ENCODE measurements at regions of chr19 and their contacts with region 1.

Region 1: DNA sequence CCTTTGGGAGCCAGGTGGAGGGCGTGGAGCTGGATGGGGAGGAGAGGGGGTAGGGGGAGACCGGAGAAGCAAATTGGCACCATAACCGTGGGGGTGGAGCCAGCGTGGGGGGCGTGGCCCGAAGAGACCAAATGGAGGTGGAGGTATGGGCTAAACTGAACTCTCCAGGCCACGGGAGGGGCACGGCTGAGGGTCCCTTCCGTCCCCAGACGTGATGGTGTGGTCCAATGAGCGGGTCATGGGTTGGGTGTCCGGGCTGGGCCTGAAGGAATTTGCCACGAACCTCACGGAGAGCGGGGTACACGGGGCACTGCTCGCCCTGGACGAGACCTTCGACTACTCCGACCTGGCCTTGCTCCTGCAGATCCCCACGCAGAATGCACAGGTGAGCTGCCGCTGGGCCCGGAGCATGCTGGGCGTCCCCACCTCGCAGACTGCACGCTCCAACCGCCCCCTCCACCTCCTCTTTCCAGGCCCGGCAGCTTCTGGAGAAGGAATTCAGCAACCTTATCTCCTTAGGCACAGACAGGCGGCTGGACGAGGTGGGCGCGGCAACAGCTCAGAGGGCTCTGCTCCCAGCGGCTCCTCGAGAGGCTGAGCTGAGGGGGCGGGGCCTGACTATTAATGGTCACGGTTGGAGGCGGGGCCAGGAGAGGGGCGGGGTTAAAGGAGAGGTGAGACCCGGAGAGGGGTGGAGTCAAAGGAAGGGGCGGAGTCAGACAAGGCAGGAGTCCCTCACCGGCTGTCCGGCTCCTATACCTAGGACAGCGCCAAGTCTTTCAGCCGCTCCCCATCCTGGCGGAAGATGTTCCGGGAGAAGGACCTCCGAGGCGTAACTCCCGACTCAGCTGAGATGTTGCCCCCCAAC is 6.2 kb downstream of the HRC start:
- DNase-seq: peak; percentile 99
- H3K4me3 ChIP-seq: peak overlapping the region; percentile 65 to 88 (median 70)
- H3K27ac ChIP-seq: peak overlapping the region; percentile 80 to 87 (median 87)
- H3K4me1 ChIP-seq: peaks cover 33 to 56% (median 53%) of the 10 kb centered on the region in 4 donors
- H3K27me3 ChIP-seq: no peaks in the 10 kb centered on the region
- CTCF ChIP-seq: no peak
- EP300 ChIP-seq: no peak
- POLR2A ChIP-seq: peak; percentile 4

Region 2: DNA sequence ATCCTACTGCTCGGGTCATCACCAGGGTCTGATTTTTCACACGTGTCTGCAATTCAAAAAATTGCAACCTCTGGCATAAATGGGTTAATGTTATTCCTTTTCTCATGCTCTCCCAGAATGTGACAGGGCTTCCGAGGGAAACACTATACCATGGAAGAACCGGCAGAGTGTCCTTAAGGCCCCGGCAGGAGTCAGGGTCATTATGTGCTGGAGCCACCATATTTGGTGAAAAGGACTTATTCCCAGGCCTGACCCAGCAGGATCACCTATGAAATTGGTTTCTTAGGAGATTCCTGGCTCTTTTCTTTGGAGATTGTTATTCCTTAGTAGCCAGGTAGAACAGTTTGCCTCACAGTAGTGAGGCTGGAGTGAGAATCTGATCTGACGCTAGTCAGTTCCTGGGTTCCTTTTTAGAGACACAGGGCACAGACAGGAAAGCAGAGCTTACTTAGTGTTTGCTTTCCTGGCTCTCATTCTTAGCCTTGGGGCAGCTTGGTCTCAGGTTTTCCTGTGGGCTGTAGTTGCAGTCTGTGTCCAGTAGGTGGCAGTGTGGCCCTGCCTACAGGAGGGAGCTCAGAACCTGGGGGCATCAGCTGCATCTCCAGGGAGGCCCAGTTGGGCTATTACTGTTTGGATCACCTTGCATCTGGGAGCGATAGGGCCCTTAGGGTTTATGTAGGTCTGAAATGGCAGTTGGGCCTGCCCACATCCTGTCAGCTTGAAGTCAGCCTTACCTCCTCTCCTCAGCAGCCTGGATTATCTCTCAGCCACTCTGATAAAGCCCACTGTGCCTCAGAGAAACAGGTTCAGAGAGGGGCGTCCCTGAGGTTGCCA is 51.3 kb before region 1 on chr19:
- intact Hi-C with region 1: loop called (anchors 5 kb)
- DNase-seq: no peak
- H3K4me3 ChIP-seq: no peak overlapping the region
- H3K27ac ChIP-seq: peak overlapping the region in 1 of 4 donors; percentile 38
- H3K4me1 ChIP-seq: peaks cover 14 to 33% (median 29%) of the 10 kb centered on the region in 4 donors
- H3K27me3 ChIP-seq: no peaks in the 10 kb centered on the region
- CTCF ChIP-seq: peak in 2 of 3 experiments; percentile 98 to 99
- EP300 ChIP-seq: no peak
- POLR2A ChIP-seq: no peak

Region 3: GRCh38 chr19:49113762-49114629 is 35.0 kb before region 1 on chr19 and contains the start of gene LIN7B:
- intact Hi-C with region 1: loop called (anchors 5 kb)
- DNase-seq: no peak
- H3K4me3 ChIP-seq: peak within 1 kb of the TSS; percentile 89 to 97 (median 93)
- H3K27ac ChIP-seq: peak within 1 kb of the TSS; percentile 84 to 91 (median 90)
- H3K4me1 ChIP-seq: peaks cover 34 to 55% (median 44%) of the 10 kb centered on the region in 4 donors
- H3K27me3 ChIP-seq: no peaks in the 10 kb centered on the region
- CTCF ChIP-seq: peak; percentile 45 to 70 (median 67)
- EP300 ChIP-seq: no peak
- POLR2A ChIP-seq: no peak
- total RNA-seq, gene LIN7B: 7.5 to 21.4 (median 15.5) TPM

Region 4: DNA sequence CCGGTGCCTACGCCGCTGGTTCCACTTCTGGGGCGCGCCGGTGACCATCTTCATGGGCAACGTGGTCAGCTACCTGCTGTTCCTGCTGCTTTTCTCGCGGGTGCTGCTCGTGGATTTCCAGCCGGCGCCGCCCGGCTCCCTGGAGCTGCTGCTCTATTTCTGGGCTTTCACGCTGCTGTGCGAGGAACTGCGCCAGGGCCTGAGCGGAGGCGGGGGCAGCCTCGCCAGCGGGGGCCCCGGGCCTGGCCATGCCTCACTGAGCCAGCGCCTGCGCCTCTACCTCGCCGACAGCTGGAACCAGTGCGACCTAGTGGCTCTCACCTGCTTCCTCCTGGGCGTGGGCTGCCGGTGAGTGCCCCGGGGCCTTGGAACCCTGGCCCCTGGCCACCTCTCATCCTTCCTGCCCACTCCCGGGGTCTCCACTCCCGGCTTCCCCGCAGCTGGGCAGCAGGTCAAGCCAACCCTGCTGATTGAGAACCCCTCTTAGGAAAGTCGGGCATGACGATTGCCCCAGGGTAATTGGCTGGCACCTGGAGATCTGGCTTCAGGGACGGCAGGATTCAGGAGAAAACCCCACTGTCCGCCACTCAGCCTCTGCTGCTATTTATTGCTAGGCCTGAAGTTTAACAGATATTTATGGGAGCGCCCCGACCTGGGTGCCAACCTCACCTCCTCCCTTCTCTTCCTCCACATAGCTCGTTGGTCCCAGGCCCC is 47.7 kb after region 1 on chr19:
- intact Hi-C with region 1: loop called (anchors 5 kb)
- DNase-seq: no peak
- H3K4me3 ChIP-seq: peak overlapping the region in 3 of 4 donors; percentile 25 to 34 (median 33)
- H3K27ac ChIP-seq: peak overlapping the region; percentile 47 to 69 (median 56)
- H3K4me1 ChIP-seq: peaks cover 0 to 17% (median 12%) of the 10 kb centered on the region in 4 donors
- H3K27me3 ChIP-seq: no peaks in the 10 kb centered on the region
- CTCF ChIP-seq: no peak
- EP300 ChIP-seq: no peak
- POLR2A ChIP-seq: no peak